ENCODE measurements at regions of chr3 and their contacts with region 1.

Region 1: GRCh38 chr3:52536369-52537164 is at the start of gene UQCC5:
- H3K4me3 Mint-ChIP-seq: peak within 1 kb of the TSS; percentile 80
- H3K27ac Mint-ChIP-seq: peak within 1 kb of the TSS; percentile 91
- H3K4me1 Mint-ChIP-seq: peaks cover 67% of the 10 kb centered on the region
- H3K27me3 Mint-ChIP-seq: peaks cover 2% of the 10 kb centered on the region

Region 2: DNA sequence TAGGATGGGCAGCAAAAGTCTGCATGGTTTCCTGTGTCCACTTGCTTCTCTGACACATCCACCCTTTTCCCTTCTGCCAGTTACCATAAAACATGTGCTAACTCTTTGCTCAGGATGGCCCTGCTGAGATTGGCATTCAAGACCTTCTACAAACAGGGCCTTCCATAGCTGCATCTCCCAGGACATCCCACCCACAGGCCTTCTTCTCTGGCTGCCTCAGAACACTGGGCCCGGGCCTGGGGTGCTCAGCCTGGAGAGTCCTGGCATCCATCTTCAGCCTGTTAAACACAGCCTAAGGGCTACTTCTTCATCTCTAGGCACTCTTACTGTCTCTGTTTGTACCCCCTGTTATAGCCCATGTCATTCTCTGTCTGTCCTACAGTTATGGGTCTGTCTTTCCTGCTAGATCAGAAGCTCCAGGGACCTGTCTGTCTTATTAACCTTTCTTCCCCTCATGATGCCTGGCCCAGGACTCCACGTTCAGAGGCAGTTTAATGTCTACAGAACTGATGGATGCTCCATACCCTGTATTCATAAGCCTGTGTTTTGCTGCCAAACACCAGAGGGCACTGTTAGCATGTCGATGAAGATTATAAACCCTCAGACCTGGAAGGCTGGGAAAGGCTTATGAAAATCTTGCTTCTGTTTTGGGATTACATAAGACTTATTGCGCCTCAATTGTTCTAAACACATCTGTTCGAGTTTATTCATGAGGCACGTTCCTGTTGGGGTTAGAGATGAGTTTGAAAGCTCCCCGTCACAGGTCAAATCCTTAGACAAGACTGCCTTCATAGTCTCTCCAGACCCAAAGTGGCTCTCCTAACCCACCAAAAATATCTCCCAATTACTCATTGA is 108.2 kb before region 1 on chr3:
- intact Hi-C with region 1: no loop called
- H3K4me3 Mint-ChIP-seq: no peak overlapping the region
- H3K27ac Mint-ChIP-seq: no peak overlapping the region
- H3K4me1 Mint-ChIP-seq: peaks cover 21% of the 10 kb centered on the region
- H3K27me3 Mint-ChIP-seq: peaks cover 1% of the 10 kb centered on the region

Region 3: GRCh38 chr3:52455283-52456168 is 81.0 kb before region 1 on chr3 and contains the start of gene NISCH:
- intact Hi-C with region 1: loop called (anchors 5 kb)
- H3K4me3 Mint-ChIP-seq: peak within 1 kb of the TSS; percentile 80
- H3K27ac Mint-ChIP-seq: peak within 1 kb of the TSS; percentile 82
- H3K4me1 Mint-ChIP-seq: peaks cover 45% of the 10 kb centered on the region
- H3K27me3 Mint-ChIP-seq: peaks cover 4% of the 10 kb centered on the region

Region 4: GRCh38 chr3:52471371-52472238 is 65.0 kb before region 1 on chr3:
- intact Hi-C with region 1: loop called (anchors 1 kb)
- H3K4me3 Mint-ChIP-seq: peak overlapping the region; percentile 26
- H3K27ac Mint-ChIP-seq: peak overlapping the region; percentile 85
- H3K4me1 Mint-ChIP-seq: peaks cover 69% of the 10 kb centered on the region
- H3K27me3 Mint-ChIP-seq: no peaks in the 10 kb centered on the region

Region 5: DNA sequence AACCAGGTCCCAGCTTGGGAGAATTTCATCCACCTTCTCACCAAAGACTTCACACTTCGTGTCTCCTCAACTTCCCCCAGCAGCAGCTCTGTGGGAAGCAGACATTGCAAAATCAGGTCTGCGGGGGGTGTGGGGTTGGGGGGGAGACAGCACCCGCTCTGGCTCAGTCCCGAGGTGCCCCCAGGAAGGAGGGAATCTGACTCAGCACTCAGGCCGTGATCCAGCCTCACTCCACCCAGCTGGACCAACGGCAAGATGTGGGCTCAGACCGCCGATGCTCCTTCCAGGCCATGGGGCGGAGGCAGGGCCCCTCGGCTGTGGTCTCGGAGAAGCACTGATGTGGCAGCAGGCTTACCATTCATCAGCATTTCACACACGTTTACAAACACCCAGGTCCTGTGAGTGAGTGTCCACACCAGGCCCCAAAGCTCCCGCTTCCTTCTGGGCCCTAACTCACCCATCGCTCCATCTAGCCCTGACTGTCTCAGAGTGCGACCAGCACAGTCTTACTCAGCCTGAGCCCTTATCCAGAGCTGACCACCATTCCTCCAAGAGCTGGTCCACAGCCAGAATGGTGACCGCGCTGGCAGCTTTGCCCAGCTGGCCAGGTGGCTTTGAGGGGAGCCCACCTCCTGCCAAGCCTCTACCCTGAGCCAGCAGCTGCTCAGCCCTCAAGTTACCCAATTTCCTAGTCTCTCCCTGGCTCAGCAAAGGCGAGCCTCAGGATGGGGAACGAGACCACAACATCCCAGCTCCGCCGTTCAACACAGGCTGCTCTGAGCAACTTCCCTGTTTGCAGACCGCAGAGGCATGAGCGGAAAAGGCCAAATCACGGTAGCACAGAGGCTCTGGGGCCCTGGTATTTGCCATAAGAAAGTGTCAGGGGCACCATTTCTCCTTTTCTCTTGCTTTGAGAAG is 38.2 kb before region 1 on chr3:
- intact Hi-C with region 1: loop called (anchors 1 kb)
- H3K4me3 Mint-ChIP-seq: peak overlapping the region; percentile 88
- H3K27ac Mint-ChIP-seq: peak overlapping the region; percentile 97
- H3K4me1 Mint-ChIP-seq: peaks cover 84% of the 10 kb centered on the region
- H3K27me3 Mint-ChIP-seq: no peaks in the 10 kb centered on the region